Right cardiac atrium (tissue), 5 donors: ENCODE measurements at regions of chr12 and their contacts with region 1.

Region 1: DNA sequence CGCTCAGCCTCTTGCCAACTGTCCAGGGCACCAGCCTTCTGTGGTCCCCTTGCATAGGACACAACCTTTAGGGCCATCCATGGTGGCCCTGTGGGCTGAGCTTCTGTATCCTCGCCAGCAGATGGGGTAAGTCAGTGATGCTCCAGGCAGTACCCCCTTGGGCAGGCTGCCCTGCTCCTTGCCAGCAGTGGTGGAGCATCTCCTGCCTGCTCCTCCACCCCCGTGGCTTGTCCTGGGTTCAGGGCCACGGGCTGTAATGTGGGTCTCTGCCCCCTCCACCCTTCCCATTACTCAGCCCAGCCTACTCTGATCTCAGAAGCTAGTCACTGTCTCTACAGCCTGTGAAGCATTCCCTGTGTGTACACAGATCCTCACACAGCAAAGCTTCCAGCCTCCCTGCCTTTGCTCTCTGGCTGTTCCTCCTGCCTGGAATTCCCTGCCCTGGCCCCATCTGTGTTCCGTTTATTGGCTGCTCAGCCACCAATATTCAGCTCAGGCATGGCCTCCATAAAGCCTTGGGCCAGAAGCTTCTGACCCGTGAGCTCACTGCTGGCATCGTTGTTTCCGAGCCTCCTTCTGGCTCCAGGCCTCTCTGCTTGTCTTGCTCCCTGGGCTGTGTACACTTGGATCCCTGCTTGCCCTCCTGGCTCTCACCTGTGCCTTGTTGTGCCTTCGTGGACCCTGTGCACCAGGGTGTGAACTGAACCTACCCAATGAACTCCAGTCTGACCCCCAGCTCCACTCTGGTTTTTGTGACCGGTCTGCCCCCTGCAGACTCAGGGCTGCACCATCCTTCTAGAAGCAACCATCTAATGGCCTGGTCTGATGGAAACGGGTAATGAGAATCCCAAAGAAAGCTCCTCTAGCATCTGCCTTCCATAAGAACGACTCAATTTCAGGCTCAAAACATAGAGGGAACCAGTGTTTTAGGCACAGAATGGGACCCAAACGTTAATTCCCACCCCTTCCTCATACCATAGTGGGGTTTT is 177.0 kb upstream of the PRMT8 start:
- DNase-seq: peak in 1 of 3 donors; percentile 70
- ATAC-seq: peak; percentile 2 to 32
- H3K4me3 ChIP-seq: no peak overlapping the region
- H3K27ac ChIP-seq: no peak overlapping the region
- H3K4me1 ChIP-seq: peaks cover 4% of the 10 kb centered on the region
- H3K27me3 ChIP-seq: no peaks in the 10 kb centered on the region

Region 2: DNA sequence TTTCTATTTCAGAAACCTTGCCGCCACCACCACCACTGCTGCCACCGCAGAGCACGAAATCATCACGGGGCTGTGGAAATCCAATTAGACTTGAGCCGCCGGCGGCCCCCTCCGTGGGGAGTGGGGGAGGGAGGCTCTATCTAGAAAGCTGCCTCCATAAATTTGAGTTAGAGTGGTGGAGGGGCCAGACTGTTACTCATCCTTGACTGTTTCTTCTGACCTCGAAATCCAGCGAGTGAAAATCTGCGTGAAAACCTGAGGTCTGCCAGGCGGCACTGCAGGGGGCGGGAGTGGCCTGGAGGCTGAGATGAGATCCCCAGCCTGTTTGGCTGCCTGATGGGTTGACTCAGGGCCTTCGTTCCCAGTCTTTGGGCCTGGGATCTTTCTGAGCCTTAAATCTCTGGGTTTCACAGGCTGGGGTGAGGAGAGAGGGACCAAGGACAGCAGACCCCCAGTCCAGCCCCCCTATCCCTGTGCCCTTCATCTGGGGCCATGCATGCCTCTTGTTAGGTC is 206.8 kb before region 1 on chr12:
- intact Hi-C with region 1: no loop called
- DNase-seq: no peak
- ATAC-seq: peak in 1 of 2 donors; percentile 6
- H3K4me3 ChIP-seq: no peak overlapping the region
- H3K27ac ChIP-seq: no peak overlapping the region
- H3K4me1 ChIP-seq: peaks cover 13% of the 10 kb centered on the region
- H3K27me3 ChIP-seq: no peaks in the 10 kb centered on the region

Region 3: GRCh38 chr12:3417937-3418462 is 104.0 kb after region 1 on chr12:
- intact Hi-C with region 1: no loop called
- DNase-seq: no peak
- ATAC-seq: no peak
- H3K4me3 ChIP-seq: no peak overlapping the region
- H3K27ac ChIP-seq: no peak overlapping the region
- H3K4me1 ChIP-seq: no peaks in the 10 kb centered on the region
- H3K27me3 ChIP-seq: no peaks in the 10 kb centered on the region

Region 4: DNA sequence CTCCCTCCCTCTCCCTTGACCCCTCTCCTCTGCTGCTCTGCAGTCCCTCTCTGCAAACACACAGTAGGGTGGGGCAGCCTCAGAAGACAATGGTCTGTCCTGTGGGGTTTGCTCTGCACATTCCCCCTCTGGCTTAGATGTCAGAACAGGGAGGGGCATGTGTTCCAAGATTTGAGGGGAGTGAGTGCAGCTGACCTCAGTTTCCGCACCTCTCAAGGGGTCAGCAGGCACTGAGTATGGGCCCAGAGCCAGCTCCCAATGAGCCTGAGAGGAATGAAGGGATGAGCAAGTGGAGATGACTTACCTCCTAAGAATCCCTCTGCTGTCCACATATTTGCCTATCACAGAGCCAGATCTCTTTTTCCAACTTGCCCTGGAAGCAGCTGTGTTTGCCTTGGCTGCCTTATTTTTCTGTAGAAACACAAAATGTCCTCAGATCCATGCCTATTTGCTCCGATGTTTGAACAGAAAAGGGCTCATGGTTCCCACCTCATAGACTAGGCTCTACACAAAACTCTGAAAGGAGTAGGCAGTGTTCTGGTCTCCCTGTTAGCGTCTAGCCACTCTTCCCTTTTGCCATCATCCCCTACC is 327.6 kb after region 1 on chr12:
- intact Hi-C with region 1: loop called in 1 of 4 experiments (anchors 10 kb)
- DNase-seq: peak in 1 of 3 donors; percentile 38
- ATAC-seq: peak; percentile 31 to 88
- H3K4me3 ChIP-seq: no peak overlapping the region
- H3K27ac ChIP-seq: no peak overlapping the region
- H3K4me1 ChIP-seq: peaks cover 5% of the 10 kb centered on the region
- H3K27me3 ChIP-seq: no peaks in the 10 kb centered on the region

Region 5: GRCh38 chr12:3803865-3804472 is 490.0 kb after region 1 on chr12:
- intact Hi-C with region 1: loop called in 1 of 4 experiments (anchors 10 kb)
- DNase-seq: peak; percentile 77 to 86 (median 78)
- ATAC-seq: peak; percentile 83 to 85
- H3K4me3 ChIP-seq: no peak overlapping the region
- H3K27ac ChIP-seq: no peak overlapping the region
- H3K4me1 ChIP-seq: no peaks in the 10 kb centered on the region
- H3K27me3 ChIP-seq: no peaks in the 10 kb centered on the region